Mucosa of descending colon (tissue), 3 donors: ENCODE measurements at regions of chrX and their contacts with region 1.

Region 1: DNA sequence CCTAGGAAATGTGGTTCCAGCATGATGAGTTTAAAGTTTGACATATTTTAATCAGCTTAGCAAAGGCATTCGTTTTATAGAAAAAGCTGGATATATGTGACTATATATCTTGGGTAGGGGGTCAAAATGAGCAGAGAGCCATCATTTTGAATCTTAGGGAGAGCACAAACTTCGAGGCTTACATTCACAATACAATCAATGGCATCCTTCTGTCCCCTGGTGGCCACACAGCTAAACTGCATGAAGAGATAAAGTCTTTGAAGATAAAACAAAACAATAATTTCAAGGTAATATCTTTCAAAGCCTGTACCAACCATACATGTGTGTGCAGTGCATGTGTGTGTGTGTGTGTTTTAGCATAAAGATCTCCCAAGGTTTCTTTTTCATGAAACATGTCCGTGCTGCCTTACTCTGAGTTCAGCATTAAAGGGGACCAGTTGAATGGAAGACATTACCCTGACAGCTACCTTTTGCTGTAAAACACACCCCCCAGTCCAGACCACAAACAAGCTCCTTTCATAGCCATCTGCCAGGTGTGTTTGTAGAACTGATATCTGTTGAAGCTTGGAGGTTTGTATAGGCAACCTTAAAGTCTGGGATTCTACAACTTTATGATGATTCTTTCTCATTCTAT is 22.0 kb downstream of the DYNLT3 start:
- DNase-seq: peak in 1 of 3 donors; percentile 65
- ATAC-seq: peak; percentile 83
- H3K4me3 ChIP-seq: no peak overlapping the region
- H3K4me1 ChIP-seq: no peaks in the 10 kb centered on the region
- CTCF ChIP-seq: peak; percentile 49

Region 2: DNA sequence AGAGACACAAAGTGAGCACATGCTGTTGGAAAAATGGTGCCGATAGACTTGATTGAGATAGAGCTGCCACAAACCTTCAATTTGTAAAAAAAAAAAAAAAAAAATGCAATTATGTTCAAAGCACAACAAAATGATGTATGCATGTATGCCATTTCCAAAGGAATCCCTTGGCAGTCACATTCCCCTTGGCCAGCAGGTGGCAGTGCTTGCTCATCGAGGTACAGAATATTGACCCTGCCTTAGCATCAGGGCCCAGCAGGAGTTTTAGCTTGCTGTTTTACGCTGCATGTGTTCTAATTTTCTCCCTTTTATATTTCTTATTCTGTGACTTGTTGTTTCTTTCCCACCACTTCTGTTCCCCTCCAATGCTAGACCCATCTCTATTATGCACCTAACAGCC is 80.0 kb before region 1 on chrX:
- intact Hi-C with region 1: loop called in 1 of 2 experiments (anchors 5 kb)
- DNase-seq: peak; percentile 75 to 87 (median 86)
- ATAC-seq: peak; percentile 93
- H3K4me3 ChIP-seq: no peak overlapping the region
- H3K4me1 ChIP-seq: no peaks in the 10 kb centered on the region
- CTCF ChIP-seq: peak; percentile 46

Region 3: DNA sequence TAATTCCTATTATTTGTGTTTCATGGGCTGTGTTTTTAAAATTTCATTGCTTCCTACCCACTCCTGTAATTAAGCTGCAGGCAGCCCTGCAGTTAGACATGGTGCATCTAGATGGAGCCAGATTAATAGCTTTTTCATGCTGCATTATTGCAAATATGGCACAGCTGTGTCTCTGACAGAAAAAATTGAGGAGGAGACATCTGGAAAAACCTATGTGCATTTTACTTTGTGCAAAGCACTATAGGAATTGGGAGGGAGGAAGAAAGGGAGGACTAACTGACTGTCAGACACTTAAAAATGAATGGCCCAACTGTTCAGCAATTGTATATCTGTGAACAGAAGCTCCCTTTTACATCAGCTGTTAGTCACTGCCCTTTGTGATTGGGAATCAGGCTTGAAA is 510.1 kb after region 1 on chrX:
- intact Hi-C with region 1: no loop called
- DNase-seq: no peak
- ATAC-seq: peak; percentile 52
- H3K4me3 ChIP-seq: no peak overlapping the region
- H3K4me1 ChIP-seq: peaks cover 2% of the 10 kb centered on the region
- CTCF ChIP-seq: no peak